H1 (cell line): ENCODE measurements at regions of chr1 and their contacts with region 1.

Region 1: GRCh38 chr1:26009796-26010460 is 11.6 kb upstream of the EXTL1 start:
- DNase-seq: peak; percentile 25 to 62
- H3K4me3 ChIP-seq: no peak overlapping the region
- H3K27ac ChIP-seq: no peak overlapping the region
- H3K4me1 ChIP-seq: peaks cover 0 to 5% (median 3%) of the 10 kb centered on the region in 4 experiments; a peak in 6 of 7 replicates
- H3K27me3 ChIP-seq: no peaks in the 10 kb centered on the region
- CTCF ChIP-seq: peak; percentile 36 to 63 (median 58)
- EP300 ChIP-seq: no peak
- POLR2A ChIP-seq: no peak
- RAD21 ChIP-seq: peak; percentile 52 to 57

Region 2: GRCh38 chr1:25987951-25988350 is 22.0 kb before region 1 on chr1:
- CTCF ChIA-PET with region 1: interaction called, 10 read pairs
- POLR2A ChIA-PET with region 1: no interaction called
- DNase-seq: no peak
- H3K4me3 ChIP-seq: no peak overlapping the region
- H3K27ac ChIP-seq: no peak overlapping the region
- H3K4me1 ChIP-seq: peaks cover 0 to 3% (median 0%) of the 10 kb centered on the region in 4 experiments; a peak in 2 of 7 replicates
- H3K27me3 ChIP-seq: no peaks in the 10 kb centered on the region; a peak in 1 of 7 replicates
- CTCF ChIP-seq: no peak
- EP300 ChIP-seq: no peak
- POLR2A ChIP-seq: no peak
- RAD21 ChIP-seq: no peak

Region 3: DNA sequence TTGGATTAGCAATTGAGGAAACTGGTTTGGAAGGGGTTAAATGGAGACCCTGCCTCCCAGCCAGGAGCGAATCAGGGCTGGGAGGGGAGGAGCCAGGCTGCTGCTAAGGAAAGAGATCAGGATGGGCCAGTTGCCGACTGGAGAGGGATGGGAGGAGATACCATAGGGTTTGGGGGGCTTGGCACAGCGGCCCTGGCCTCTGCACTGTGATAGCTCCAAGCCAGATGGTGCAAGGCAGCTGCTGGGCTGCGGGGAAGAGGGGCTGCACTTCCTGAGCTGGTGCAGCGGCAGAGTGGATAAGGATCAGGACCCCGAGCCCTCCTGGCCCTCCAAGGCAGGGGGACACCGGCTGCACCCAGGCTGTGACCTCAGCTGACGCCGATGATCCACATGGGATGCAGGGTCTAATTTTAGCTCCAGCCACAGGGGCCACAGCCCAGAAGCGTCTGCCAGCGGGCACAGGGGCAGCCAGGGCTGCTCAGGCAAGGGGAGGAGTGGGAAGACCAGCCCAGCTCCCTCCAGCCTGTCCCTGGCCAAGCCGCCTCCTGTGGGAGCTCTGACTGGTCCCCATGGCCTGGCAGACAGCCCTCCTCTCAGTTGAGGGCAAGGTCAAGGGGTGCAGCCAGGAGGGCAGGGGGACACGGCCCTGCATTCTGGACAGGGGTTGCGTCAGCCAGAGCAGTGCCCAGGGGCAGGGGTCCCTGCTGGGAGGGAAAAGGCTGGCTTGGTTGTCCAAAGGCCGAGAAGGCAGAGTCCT is 11.9 kb after region 1 on chr1 and contains the start of gene EXTL1:
- CTCF ChIA-PET with region 1: interaction called, 46 read pairs
- POLR2A ChIA-PET with region 1: interaction called, 5 read pairs
- DNase-seq: peak; percentile 59 to 81
- H3K4me3 ChIP-seq: peak within 1 kb of the TSS; percentile 36 to 55 (median 38)
- H3K27ac ChIP-seq: no peak within 1 kb of the TSS; the same call in 1 of the 2 replicates
- H3K4me1 ChIP-seq: peaks cover 0 to 19% (median 12%) of the 10 kb centered on the region in 4 experiments; a peak in 6 of 7 replicates
- H3K27me3 ChIP-seq: no peaks in the 10 kb centered on the region
- CTCF ChIP-seq: no peak
- EP300 ChIP-seq: no peak
- POLR2A ChIP-seq: peak in 1 of 2 experiments; percentile 63; a peak in 2 of 3 replicates
- RAD21 ChIP-seq: no peak
- total RNA-seq, gene EXTL1: 1.2 and 1.3 TPM in 2 replicates

Region 4: DNA sequence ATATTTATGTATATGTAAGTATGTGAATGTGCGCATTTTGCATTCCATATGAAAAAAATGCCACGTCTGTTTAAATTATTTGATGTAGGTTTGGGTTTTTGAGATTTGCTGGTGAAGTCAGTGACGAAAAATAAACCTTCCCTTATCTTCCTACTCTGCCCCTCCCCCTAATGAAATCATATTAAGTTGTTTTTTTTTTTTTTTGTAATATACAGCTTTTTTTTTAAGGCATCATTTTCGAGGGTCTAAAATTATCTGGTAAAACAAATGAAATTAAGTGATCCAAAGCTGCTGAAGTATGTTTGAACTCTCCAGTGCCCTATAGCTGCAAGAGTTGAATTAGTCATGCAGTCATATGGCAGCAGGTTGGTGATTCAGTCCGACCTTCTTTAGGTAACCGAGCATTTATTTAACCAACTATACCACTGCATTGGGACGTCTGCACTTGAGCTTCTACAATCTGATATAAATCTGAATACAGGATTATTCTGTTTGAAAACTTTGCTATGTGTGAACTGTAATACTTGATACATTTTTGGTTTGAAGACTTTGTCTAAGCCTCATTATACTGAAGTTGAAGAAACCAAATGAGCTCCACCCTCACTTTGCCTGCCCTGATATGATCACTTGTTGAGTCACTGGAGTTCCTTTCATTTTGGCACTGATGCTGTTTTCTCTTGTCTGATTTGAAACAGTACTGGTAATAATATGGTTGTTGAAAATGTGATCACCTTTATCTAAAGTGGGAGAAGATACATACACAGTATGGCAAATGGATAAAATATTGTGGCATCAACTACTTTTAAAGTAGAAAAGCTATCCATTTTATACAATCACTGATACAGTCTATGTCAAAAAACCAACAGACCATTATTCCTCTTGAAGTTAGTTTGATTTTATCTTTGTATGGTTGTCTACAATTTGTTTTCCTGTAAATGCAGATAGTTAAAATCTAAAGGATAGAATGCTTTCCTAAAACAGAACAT is 113.4 kb after region 1 on chr1:
- CTCF ChIA-PET with region 1: no interaction called
- POLR2A ChIA-PET with region 1: no interaction called
- DNase-seq: no peak
- H3K4me3 ChIP-seq: no peak overlapping the region
- H3K27ac ChIP-seq: no peak overlapping the region
- H3K4me1 ChIP-seq: no peaks in the 10 kb centered on the region
- H3K27me3 ChIP-seq: no peaks in the 10 kb centered on the region
- CTCF ChIP-seq: no peak
- EP300 ChIP-seq: no peak
- POLR2A ChIP-seq: no peak
- RAD21 ChIP-seq: no peak

Region 5: DNA sequence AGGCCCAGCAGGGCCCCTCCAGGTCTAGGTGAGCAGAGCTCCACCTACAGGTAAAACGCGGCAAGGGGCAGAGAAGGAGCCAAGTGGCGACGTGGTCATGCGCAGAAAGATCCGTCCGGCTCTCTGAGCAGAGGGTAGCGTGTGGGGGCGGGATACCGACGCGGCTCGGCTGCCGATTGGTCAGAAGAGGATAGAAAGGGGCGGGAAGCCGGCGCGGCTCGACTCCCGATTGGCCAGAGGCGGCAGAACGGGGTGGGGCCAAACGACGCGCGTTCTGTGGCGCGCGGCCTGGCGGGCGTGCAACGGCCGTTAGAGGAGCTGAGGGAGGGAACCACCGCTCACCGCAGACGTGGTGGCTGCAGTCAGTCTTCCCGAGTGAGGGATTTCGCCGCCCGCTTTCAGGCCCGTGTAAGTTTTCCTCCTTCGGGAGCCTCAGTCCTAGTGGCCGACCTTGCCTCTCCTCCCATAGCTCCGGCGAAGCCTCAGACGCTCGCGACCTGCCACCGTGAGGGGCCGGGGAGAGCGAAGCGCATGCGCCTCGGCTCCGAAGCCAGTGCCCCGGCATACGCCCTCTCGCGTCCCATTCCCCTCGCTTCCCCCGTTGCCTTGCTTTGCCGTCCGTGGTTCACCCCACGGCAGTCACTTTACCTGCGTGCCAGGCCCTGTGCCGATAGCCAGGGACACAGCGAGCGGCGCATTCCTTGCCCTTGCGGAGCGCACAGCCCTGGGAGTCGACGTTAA is 224.1 kb after region 1 on chr1 and contains the start of gene CEP85:
- CTCF ChIA-PET with region 1: no interaction called
- POLR2A ChIA-PET with region 1: no interaction called
- DNase-seq: peak; percentile 98 to 99
- H3K4me3 ChIP-seq: peak within 1 kb of the TSS; percentile 83 to 98 (median 90)
- H3K27ac ChIP-seq: peak within 1 kb of the TSS; percentile 39; the same call in 1 of the 2 replicates
- H3K4me1 ChIP-seq: peaks cover 2 to 6% (median 4%) of the 10 kb centered on the region in 4 experiments; a peak in 6 of 7 replicates
- H3K27me3 ChIP-seq: no peaks in the 10 kb centered on the region
- CTCF ChIP-seq: peak; percentile 92 to 97 (median 92)
- EP300 ChIP-seq: 0 out of 3 replicates have a peak, but pooled peaks of 1 of the 2 experiments have one; percentile 6
- POLR2A ChIP-seq: peak in 1 of 2 experiments; percentile 84; a peak in 2 of 3 replicates
- RAD21 ChIP-seq: peak; percentile 70 to 83
- total RNA-seq, gene CEP85: 35.3 and 40.4 TPM in 2 replicates